Sciatic nerve (tissue), 2 donors: ENCODE measurements at regions of chr3 and their contacts with region 1.

Region 1: GRCh38 chr3:187719628-187720336 is 17.4 kb upstream of the RTP2 start:
- DNase-seq: no peak
- ATAC-seq: peak; percentile 29

Region 2: DNA sequence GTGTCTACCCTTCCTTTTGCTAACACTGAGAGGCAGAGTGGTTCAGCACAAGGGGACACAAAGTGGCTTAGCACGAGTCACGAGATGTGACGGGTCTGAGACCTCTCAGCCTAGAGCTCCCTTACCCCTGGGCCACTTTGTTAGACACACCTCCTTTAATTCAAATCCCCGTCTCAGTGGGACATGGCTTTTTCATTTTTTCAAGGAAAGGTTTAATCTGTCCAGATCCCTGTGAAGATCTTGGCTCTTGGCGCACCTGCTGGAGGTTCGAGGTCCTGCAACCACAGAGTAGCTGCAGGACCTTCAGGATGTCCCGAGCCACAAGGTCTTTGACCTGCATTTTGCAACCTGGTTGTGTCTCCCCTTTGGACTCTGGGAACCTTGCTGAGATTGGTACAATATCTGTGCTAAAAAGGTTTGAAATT is 486.2 kb after region 1 on chr3:
- intact Hi-C with region 1: no loop called
- DNase-seq: no peak
- ATAC-seq: no peak

Region 3: GRCh38 chr3:189132231-189132707 is 1412.5 kb after region 1 on chr3:
- intact Hi-C with region 1: loop called (anchors 10 kb)
- DNase-seq: no peak
- ATAC-seq: peak; percentile 81